ENCODE measurements at regions of chr10 and their contacts with region 1.

Region 1: GRCh38 chr10:13160934-13161856 is at the start of gene MCM10:
- DNase-seq: peak; percentile 98 to 100 (median 99)
- H3K4me3 ChIP-seq: peak within 1 kb of the TSS; percentile 22 to 76 (median 54)
- H3K27ac ChIP-seq: peak within 1 kb of the TSS in 2 of 59 donors; percentile 11 to 48
- H3K27me3 ChIP-seq: no peaks in the 10 kb centered on the region
- CTCF ChIP-seq: peak; percentile 88 to 100 (median 96)
- total RNA-seq, gene MCM10: 0.11 to 2.1 (median 0.36) TPM in 51 of 120 experiments, not detected in the others

Region 2: DNA sequence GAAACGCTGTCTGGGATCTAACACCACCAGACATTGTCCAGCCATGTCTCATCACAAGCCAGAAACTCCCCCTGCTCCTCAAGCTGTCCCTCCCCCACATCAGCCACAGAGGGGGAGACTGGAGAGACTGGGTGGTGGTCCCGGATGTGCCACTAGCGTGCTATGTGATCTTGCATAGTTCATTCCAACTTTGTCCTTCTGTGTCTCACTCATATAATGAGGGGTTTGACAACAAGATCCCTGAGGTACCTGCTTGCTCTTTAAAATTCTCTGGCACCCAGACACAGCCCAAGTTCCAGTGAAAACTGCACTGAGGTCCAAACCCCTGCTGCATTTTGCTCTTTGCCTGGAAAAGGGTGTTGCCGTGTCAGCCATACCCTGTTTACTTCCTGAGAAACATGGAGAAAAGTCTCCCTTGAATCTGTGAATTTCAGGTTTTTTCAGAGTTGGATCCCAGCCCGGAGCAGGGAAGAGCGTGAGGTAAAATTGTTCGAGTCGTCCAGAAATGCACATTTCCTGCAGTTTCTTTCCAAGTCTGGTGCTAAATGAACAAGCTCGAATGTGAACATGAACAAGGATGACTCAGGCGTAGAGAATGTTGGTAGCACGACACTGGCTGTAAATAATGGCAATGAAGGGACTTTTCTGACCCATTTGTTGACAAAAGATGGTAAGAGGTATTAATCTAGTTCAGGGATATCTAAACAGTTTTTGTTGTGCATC is 316.2 kb before region 1 on chr10:
- intact Hi-C with region 1: no loop called
- DNase-seq: peak in 2 of 10 donors; percentile 18 to 43
- H3K4me3 ChIP-seq: peak overlapping the region in 9 of 59 donors; percentile 8 to 26 (median 15)
- H3K27ac ChIP-seq: peak overlapping the region in 48 of 59 donors; percentile 39 to 86 (median 64)
- H3K27me3 ChIP-seq: peaks cover 0 to 3% (median 0%) of the 10 kb centered on the region in 45 donors
- CTCF ChIP-seq: peak in 1 of 56 donors; percentile 10

Region 3: DNA sequence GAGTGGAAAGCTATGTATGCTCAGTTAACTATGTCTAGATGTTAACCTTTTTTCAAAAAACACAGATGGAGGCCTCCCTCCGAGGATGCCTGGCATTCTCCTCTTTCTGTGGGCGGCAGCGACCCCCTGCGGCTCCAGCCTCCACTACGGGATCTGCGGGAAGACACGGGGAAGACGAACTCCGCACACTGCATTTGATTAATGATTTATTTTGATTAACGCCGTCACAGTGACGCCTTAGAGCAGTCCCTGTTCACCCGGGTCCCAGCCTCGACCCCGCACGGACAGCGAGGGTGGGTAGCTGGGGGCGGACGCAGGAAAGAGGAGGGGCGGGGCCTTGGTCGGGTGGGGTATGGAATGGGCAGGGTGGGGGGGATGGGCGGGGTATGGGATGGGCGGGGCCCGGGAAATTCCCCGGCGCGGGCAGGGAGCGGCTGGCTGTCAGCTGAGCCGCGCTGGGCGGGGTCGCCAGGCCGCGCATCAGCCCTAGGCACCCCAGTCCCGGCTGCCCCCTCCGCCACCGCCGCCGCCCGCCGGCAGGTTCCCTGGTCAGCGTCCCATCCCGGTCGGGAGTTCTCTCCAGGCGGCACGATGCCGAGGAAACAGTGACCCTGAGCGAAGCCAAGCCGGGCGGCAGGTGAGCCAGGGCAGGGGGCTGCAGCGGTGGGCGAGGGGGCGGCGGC is 61.4 kb before region 1 on chr10 and contains the start of gene OPTN:
- intact Hi-C with region 1: loop called (anchors 5 kb)
- DNase-seq: peak; percentile 62 to 87 (median 74)
- H3K4me3 ChIP-seq: peak within 1 kb of the TSS; percentile 75 to 99 (median 93)
- H3K27ac ChIP-seq: peak within 1 kb of the TSS; percentile 84 to 99 (median 96)
- H3K27me3 ChIP-seq: no peaks in the 10 kb centered on the region
- CTCF ChIP-seq: peak in 55 of 56 donors; percentile 48 to 79 (median 67)
- total RNA-seq, gene OPTN: 84.3 to 188 (median 136) TPM

Region 4: GRCh38 chr10:13299437-13300287 is 138.5 kb after region 1 on chr10 and contains the start of gene PHYH:
- intact Hi-C with region 1: loop called (anchors 1 to 2 kb)
- DNase-seq: peak; percentile 78 to 94 (median 90)
- H3K4me3 ChIP-seq: peak within 1 kb of the TSS; percentile 57 to 96 (median 83)
- H3K27ac ChIP-seq: peak within 1 kb of the TSS; percentile 87 to 100 (median 97)
- H3K27me3 ChIP-seq: no peaks in the 10 kb centered on the region
- CTCF ChIP-seq: peak in 37 of 56 donors; percentile 8 to 61 (median 30)
- total RNA-seq, gene PHYH: 19.2 to 43.7 (median 30.0) TPM

Region 5: DNA sequence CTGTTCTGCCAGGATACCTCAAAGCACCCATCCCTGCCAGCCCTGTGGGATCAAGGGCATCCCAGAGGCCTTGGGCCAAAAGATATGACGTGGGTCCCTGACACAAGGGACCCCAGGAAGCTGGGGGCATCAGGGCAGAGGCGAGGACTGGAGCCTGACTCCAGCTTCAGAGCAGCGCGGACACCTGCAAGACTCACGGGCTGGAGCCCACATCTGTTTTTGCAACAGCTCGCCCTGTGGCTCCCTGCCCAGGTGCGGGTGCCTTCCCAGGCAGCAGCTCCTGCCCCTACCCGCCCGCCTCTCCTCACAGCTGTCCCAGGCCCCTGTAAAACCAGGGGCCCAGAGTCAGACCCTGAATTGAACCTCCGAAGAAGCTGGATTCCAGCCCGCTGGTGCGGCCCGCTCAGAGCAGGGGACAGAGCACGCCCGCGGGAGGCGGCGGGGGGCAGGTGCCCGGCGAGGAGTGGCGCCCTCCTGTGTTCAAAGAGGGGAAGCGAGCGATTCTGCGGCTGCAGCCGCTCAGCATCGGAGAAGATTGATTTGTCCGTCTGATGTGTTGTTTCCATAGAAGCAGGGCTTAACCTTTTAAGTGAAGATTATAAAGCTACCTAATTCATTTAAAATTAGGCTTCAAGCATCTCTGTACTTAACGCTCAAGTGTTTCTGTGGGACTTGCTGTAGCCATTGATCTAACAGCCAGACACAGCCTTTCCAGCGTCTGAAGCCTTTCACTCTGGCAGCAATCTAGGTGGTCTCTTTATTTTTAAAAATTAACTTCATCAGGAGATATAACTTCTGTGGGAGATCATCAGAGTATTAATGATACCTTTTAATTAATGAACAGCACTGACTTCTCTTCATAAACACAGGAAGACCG is 279.2 kb after region 1 on chr10:
- intact Hi-C with region 1: loop called in 1 of 2 experiments (anchors 5 kb)
- DNase-seq: peak in 8 of 10 donors; percentile 21 to 66 (median 38)
- H3K4me3 ChIP-seq: peak overlapping the region; percentile 0 to 69 (median 51)
- H3K27ac ChIP-seq: no peak overlapping the region
- H3K27me3 ChIP-seq: peaks cover 0 to 40% (median 8%) of the 10 kb centered on the region in 45 donors
- CTCF ChIP-seq: peak; percentile 45 to 90 (median 82)

Region 6: DNA sequence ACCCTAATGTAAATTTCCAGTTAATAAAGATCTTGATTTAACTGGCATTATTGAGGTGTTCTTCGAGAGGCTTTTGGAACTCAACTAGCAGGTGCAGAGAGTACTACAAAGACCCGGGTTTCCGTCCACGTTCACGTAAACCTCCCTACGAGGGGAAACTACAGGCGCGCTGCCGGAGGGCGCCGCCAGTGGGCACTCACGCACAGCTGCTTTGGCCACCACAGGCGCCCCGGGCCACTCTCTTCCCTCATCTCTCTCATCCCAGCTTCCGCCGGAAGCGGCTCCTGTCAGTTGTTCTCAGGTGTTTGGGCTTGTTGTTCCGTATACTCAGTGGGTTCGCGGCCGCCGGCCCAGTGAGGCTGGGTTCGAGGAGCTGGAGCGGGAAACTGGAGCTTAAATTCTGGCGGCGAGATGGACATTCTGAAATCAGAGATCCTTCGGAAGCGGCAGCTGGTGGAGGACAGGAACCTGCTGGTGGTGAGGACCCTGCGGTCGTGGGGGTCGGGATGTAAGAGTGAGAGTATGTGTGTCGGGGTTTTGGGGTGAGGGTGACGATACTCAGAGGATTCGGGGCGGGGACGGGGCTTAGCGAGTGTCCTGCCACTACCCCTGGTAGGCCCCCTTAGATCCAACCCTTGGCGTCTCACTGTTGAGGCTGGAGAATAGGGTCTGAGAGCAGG is 425.6 kb after region 1 on chr10 and contains the start of gene PRPF18:
- intact Hi-C with region 1: loop called in 1 of 2 experiments (anchors 5 kb)
- DNase-seq: peak; percentile 90 to 97 (median 94)
- H3K4me3 ChIP-seq: peak within 1 kb of the TSS; percentile 58 to 99 (median 89)
- H3K27ac ChIP-seq: peak within 1 kb of the TSS in 28 of 59 donors; percentile 10 to 84 (median 60)
- H3K27me3 ChIP-seq: peaks cover 0 to 26% (median 0%) of the 10 kb centered on the region in 45 donors
- CTCF ChIP-seq: peak; percentile 95 to 100 (median 99)
- total RNA-seq, gene PRPF18: 16.6 to 41.9 (median 29.6) TPM